Ovary (tissue), 10 donors: ENCODE measurements at regions of chr1 and their contacts with region 1.

Region 1: GRCh38 chr1:117895482-117896114 is 33.8 kb downstream of the GDAP2 start:
- DNase-seq: peak; percentile 35 to 72 (median 48)
- H3K4me3 ChIP-seq: no peak overlapping the region
- H3K27ac ChIP-seq: no peak overlapping the region
- H3K4me1 ChIP-seq: no peaks in the 10 kb centered on the region
- H3K27me3 ChIP-seq: no peaks in the 10 kb centered on the region
- CTCF ChIP-seq: peak; percentile 42 to 66 (median 55)
- EP300 ChIP-seq: no peak
- POLR2A ChIP-seq: no peak

Region 2: GRCh38 chr1:117512743-117513321 is 382.8 kb before region 1 on chr1:
- intact Hi-C with region 1: loop called in 2 of 4 experiments (anchors 10 kb)
- DNase-seq: no peak
- H3K4me3 ChIP-seq: no peak overlapping the region
- H3K27ac ChIP-seq: no peak overlapping the region
- H3K4me1 ChIP-seq: no peaks in the 10 kb centered on the region
- H3K27me3 ChIP-seq: no peaks in the 10 kb centered on the region
- CTCF ChIP-seq: peak in 2 of 3 donors; percentile 31 to 33
- EP300 ChIP-seq: no peak
- POLR2A ChIP-seq: no peak

Region 3: GRCh38 chr1:117952386-117952785 is 56.8 kb after region 1 on chr1:
- intact Hi-C with region 1: no loop called
- DNase-seq: no peak
- H3K4me3 ChIP-seq: no peak overlapping the region
- H3K27ac ChIP-seq: no peak overlapping the region
- H3K4me1 ChIP-seq: no peaks in the 10 kb centered on the region
- H3K27me3 ChIP-seq: no peaks in the 10 kb centered on the region
- CTCF ChIP-seq: no peak
- EP300 ChIP-seq: no peak
- POLR2A ChIP-seq: no peak

Region 4: GRCh38 chr1:118113261-118113660 is 217.7 kb after region 1 on chr1:
- intact Hi-C with region 1: no loop called
- DNase-seq: no peak
- H3K4me3 ChIP-seq: no peak overlapping the region
- H3K27ac ChIP-seq: no peak overlapping the region
- H3K4me1 ChIP-seq: no peaks in the 10 kb centered on the region
- H3K27me3 ChIP-seq: peaks cover 2% of the 10 kb centered on the region
- CTCF ChIP-seq: no peak
- EP300 ChIP-seq: no peak
- POLR2A ChIP-seq: no peak